ENCODE measurements at regions of chr12 and their contacts with region 1.

Region 1: GRCh38 chr12:92259852-92260251 is 114.2 kb upstream of the BTG1 start:
- DNase-seq: no peak
- H3K4me3 ChIP-seq: no peak overlapping the region
- H3K27ac ChIP-seq: no peak overlapping the region
- H3K4me1 ChIP-seq: no peaks in the 10 kb centered on the region
- H3K27me3 ChIP-seq: no peaks in the 10 kb centered on the region
- CTCF ChIP-seq: no peak

Region 2: DNA sequence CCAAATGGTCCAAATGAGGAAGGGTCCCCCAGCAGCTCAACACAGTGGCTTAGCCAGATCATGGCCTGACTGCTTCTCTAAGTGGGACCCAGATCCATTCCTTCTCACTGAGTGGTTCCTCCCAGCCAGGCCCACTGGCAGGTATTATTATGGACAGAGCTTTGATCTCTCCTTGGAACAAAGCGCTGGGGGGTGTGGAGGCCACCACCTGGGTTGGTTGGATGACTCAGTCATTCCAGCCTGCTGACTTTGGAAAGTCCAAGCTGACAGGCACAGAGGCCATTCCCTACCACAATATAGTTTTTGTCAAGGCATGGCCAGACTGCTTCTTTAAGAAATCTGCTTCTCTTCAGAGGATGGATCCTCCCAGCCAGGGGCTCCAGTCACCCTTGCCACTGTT is 455.3 kb before region 1 on chr12:
- CTCF ChIA-PET with region 1: no interaction called
- POLR2A ChIA-PET with region 1: no interaction called
- intact Hi-C with region 1: no loop called
- DNase-seq: peak in 1 of 2 experiments; percentile 36
- H3K4me3 ChIP-seq: no peak overlapping the region
- H3K27ac ChIP-seq: no peak overlapping the region
- H3K4me1 ChIP-seq: no peaks in the 10 kb centered on the region
- H3K27me3 ChIP-seq: no peaks in the 10 kb centered on the region
- CTCF ChIP-seq: no peak

Region 3: GRCh38 chr12:92206596-92206995 is 53.3 kb before region 1 on chr12:
- CTCF ChIA-PET with region 1: interaction called, 10 read pairs
- POLR2A ChIA-PET with region 1: no interaction called
- intact Hi-C with region 1: no loop called
- DNase-seq: no peak
- H3K4me3 ChIP-seq: no peak overlapping the region
- H3K27ac ChIP-seq: peak overlapping the region; percentile 89; the same call in 1 of the 2 replicates
- H3K4me1 ChIP-seq: peaks cover 30% of the 10 kb centered on the region
- H3K27me3 ChIP-seq: no peaks in the 10 kb centered on the region
- CTCF ChIP-seq: no peak

Region 4: GRCh38 chr12:92431146-92431545 is 171.3 kb after region 1 on chr12:
- CTCF ChIA-PET with region 1: no interaction called
- POLR2A ChIA-PET with region 1: interaction called, 15 read pairs
- intact Hi-C with region 1: no loop called
- DNase-seq: no peak
- H3K4me3 ChIP-seq: no peak overlapping the region
- H3K27ac ChIP-seq: no peak overlapping the region
- H3K4me1 ChIP-seq: no peaks in the 10 kb centered on the region; the same call in 1 of the 2 replicates
- H3K27me3 ChIP-seq: no peaks in the 10 kb centered on the region
- CTCF ChIP-seq: no peak

Region 5: DNA sequence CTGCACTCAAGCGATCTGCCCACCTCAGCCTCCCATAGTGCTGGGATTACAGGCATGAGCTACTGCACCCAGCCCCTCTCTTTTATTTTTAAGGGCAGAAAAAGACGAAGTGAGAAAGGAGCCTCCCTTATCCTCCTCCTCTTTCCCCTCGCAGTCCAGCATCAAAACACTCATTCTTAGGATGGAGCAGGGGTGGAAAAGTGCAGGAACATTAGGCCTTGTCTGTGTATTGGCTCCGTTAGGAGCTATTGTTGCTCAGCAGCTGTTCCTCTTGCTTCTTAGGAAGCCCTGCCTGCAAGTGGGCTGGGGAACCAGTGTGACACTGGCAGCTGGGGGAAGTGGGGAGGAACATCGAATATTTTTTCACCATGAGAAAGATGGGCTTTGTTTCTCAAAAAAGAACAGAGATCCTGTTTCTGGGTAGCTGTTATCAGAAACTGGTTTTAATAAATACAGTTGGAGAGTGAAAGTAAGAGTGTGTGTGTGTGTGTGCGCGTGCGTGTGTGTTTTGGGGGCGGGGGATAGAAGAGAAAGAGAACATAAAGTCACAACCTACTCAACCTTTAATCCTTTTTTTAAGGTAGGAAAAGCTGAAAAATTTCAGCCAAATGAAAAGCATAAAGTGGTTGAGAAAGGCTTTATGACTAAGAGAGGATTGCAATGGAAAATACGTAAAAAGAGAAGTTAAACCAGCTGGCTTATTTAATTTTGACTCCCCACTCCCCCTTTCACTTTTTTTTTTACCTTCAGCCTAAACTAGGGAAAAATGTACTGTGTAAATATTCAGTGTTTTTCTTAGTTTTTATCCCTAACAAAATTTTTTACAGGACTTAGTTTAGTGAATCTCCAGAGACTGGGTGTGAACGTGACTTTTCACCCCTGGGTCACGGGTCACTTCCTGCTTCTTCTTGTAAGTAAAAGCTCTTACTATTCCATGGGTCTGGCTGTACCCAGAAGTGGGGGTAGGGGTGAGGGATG is 245.7 kb after region 1 on chr12:
- CTCF ChIA-PET with region 1: no interaction called
- POLR2A ChIA-PET with region 1: no interaction called
- intact Hi-C with region 1: no loop called
- DNase-seq: no peak
- H3K4me3 ChIP-seq: no peak overlapping the region
- H3K27ac ChIP-seq: no peak overlapping the region
- H3K4me1 ChIP-seq: no peaks in the 10 kb centered on the region
- H3K27me3 ChIP-seq: no peaks in the 10 kb centered on the region
- CTCF ChIP-seq: no peak

Region 6: DNA sequence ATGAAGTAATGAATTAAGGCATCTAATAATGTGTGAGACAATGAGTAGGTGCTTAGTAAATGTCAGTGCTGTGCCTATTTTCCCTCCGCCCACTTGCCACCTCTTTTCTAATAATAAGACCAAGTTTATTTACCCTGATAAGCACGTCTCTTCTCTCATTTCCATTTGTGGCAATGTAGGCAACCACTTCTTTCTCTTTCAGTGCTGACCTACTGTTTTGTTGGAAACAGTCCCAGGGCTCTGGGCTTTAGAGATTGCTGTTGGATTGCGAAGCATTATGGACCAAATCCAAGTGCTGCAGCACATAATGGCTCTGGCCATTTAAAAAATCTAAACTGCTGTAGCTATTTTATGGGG is 301.7 kb after region 1 on chr12:
- CTCF ChIA-PET with region 1: no interaction called
- POLR2A ChIA-PET with region 1: no interaction called
- intact Hi-C with region 1: no loop called
- DNase-seq: no peak
- H3K4me3 ChIP-seq: no peak overlapping the region
- H3K27ac ChIP-seq: no peak overlapping the region
- H3K4me1 ChIP-seq: no peaks in the 10 kb centered on the region
- H3K27me3 ChIP-seq: no peaks in the 10 kb centered on the region
- CTCF ChIP-seq: no peak